Endothelial cell of umbilical vein (primary cell): ENCODE measurements at regions of chr6 and their contacts with region 1.

Region 1: DNA sequence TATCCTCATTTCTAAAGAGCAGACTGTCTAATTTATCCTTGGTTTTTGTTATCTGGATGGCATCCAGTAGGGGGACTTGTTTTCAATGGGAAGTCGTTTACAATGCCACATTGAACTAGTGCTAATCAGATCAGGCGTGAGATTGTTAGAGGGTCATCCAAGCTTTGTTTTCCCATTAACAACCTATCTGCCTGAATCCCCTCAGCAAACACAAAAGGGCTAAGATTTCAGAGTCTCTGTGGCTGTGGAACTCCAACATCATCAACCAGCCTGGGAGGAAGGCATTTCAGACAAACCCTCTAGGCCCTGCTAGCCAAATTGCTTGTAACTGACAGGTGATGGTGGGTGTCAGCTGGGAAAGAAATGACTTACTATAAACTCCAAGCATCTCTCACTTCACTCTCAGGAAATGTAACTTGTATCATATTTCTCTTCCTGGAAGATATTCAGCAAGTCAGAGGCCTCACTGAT is 47.7 kb downstream of the COL19A1 start:
- DNase-seq: no peak
- H3K4me3 ChIP-seq: no peak overlapping the region
- H3K27ac ChIP-seq: no peak overlapping the region
- H3K4me1 ChIP-seq: no peaks in the 10 kb centered on the region
- H3K27me3 ChIP-seq: no peaks in the 10 kb centered on the region
- CTCF ChIP-seq: no peak
- POLR2A ChIP-seq: no peak

Region 2: GRCh38 chr6:68677058-68677457 is 1237.0 kb before region 1 on chr6:
- CTCF ChIA-PET with region 1: no interaction called
- POLR2A ChIA-PET with region 1: no interaction called
- dilution Hi-C with region 1: no loop called
- intact Hi-C with region 1: no loop called
- DNase-seq: no peak
- H3K4me3 ChIP-seq: no peak overlapping the region
- H3K27ac ChIP-seq: no peak overlapping the region
- H3K4me1 ChIP-seq: no peaks in the 10 kb centered on the region
- H3K27me3 ChIP-seq: no peaks in the 10 kb centered on the region
- CTCF ChIP-seq: no peak
- POLR2A ChIP-seq: no peak

Region 3: GRCh38 chr6:69976591-69977090 is 62.6 kb after region 1 on chr6:
- CTCF ChIA-PET with region 1: no interaction called
- POLR2A ChIA-PET with region 1: no interaction called
- dilution Hi-C with region 1: no loop called
- intact Hi-C with region 1: loop called (anchors 2 kb)
- DNase-seq: no peak
- H3K4me3 ChIP-seq: no peak overlapping the region
- H3K27ac ChIP-seq: no peak overlapping the region
- H3K4me1 ChIP-seq: no peaks in the 10 kb centered on the region
- H3K27me3 ChIP-seq: no peaks in the 10 kb centered on the region
- CTCF ChIP-seq: no peak
- POLR2A ChIP-seq: no peak